ENCODE measurements at regions of chr13 and their contacts with region 1.

Region 1: GRCh38 chr13:62061751-62062150 is 646.1 kb upstream of the PCDH20 start:
- DNase-seq: no peak
- ATAC-seq: no peak
- H3K4me3 ChIP-seq: no peak overlapping the region
- H3K27ac ChIP-seq: no peak overlapping the region
- H3K4me1 ChIP-seq: no peaks in the 10 kb centered on the region
- H3K27me3 ChIP-seq: no peaks in the 10 kb centered on the region
- CTCF ChIP-seq: no peak

Region 2: GRCh38 chr13:62038214-62038613 is 23.5 kb before region 1 on chr13:
- intact Hi-C with region 1: loop called in 1 of 10 experiments (anchors 1 kb)
- DNase-seq: no peak
- ATAC-seq: no peak
- H3K4me3 ChIP-seq: no peak overlapping the region
- H3K27ac ChIP-seq: no peak overlapping the region
- H3K4me1 ChIP-seq: no peaks in the 10 kb centered on the region
- H3K27me3 ChIP-seq: no peaks in the 10 kb centered on the region
- CTCF ChIP-seq: no peak

Measured in heart right ventricle (tissue), 16 donors.